ENCODE measurements at regions of chr11 and their contacts with region 1.

Region 1: DNA sequence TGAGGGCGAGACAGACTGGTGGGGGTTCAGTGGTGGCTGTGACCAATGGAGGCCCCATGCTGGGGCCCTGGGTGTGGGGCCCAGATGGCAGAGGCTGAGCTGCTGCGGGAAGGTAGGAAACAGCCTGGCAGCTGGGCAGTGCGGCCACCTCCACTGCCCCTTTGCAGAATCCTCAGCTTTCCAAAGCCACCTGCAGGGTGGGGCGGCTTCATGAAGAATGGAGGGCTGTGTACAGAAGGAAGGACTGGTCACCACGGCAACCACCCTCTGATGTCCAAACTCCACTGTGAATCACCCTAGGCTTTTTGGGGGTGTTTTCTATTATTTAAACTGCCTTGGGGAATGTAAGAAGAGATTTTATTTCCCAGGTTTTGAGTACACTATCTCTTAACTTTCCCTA is 166.3 kb upstream of the NAV2 start:
- DNase-seq: no peak
- ATAC-seq: peak in 1 of 2 donors; percentile 13

Region 2: DNA sequence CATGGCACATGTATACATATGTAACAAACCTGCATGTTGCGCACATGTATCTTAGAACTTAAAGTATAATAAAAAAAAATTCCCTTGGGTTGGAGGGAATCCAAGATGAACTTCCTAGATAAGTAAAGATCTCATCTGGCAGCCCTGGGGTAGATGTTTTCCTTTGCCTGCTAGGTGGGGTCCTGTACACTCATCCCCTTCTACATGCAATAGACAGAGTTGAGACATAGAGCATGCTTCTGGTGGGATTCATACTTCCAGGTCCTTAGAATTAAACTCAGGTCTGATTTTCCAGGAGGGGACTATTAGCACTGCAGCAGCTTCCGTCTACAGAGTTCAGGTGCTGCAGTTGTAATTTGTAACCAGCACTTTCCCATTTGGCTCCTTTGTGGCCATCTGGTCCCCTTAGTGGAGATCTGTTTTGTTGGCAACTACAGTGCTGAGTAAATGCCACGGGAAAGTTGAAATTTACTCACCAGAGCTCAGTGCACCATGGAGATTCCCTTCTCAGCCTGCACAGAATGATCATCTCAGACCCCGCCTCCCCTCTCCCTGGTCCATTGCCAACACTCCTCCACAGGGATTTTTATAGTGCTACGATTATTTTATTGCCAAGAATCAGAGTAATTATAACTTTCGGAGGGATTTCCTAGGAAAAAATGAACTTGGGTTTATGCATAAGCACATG is 85.5 kb before region 1 on chr11:
- intact Hi-C with region 1: loop called in 1 of 2 experiments (anchors 10 kb)
- DNase-seq: peak; percentile 39
- ATAC-seq: peak; percentile 65 to 85

Region 3: GRCh38 chr11:21026685-21027084 is 1480.4 kb after region 1 on chr11:
- intact Hi-C with region 1: no loop called
- DNase-seq: no peak
- ATAC-seq: no peak

Measured in left cardiac atrium (tissue), 4 donors.